ENCODE measurements at regions of chr12 and their contacts with region 1.

Region 1: GRCh38 chr12:69070319-69071090 is 137.5 kb upstream of the CPM start:
- DNase-seq: no peak
- ATAC-seq: peak; percentile 75 to 79
- H3K4me3 ChIP-seq: no peak overlapping the region
- H3K27ac ChIP-seq: no peak overlapping the region
- H3K4me1 ChIP-seq: peaks cover 9% of the 10 kb centered on the region
- H3K27me3 ChIP-seq: no peaks in the 10 kb centered on the region
- CTCF ChIP-seq: peak; percentile 88

Region 2: GRCh38 chr12:68866950-68867349 is 203.6 kb before region 1 on chr12:
- intact Hi-C with region 1: loop called (anchors 10 kb)
- DNase-seq: no peak
- ATAC-seq: no peak
- H3K4me3 ChIP-seq: no peak overlapping the region
- H3K27ac ChIP-seq: no peak overlapping the region
- H3K4me1 ChIP-seq: peaks cover 8% of the 10 kb centered on the region
- H3K27me3 ChIP-seq: no peaks in the 10 kb centered on the region
- CTCF ChIP-seq: no peak

Region 3: DNA sequence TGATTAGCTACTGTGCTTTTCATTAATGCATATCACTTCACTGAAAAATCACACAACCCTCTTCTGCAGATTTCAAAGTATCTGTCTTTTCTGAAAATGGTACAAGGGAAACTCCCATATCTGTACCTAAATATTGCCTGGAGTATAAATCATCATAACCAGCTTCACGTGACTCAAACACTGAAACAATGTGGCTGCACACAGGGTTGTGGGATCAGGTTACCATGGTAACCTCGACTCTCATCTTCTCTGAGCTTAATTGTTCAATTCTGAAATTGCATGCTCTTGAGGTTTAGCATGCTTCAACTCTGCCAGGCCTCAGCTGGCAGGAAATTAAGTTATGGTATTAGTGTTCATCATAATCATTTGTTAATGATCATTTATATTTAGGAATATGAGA is 91.3 kb after region 1 on chr12:
- intact Hi-C with region 1: no loop called
- DNase-seq: no peak
- ATAC-seq: no peak
- H3K4me3 ChIP-seq: no peak overlapping the region
- H3K27ac ChIP-seq: no peak overlapping the region
- H3K4me1 ChIP-seq: peaks cover 6% of the 10 kb centered on the region
- H3K27me3 ChIP-seq: no peaks in the 10 kb centered on the region
- CTCF ChIP-seq: no peak

Region 4: DNA sequence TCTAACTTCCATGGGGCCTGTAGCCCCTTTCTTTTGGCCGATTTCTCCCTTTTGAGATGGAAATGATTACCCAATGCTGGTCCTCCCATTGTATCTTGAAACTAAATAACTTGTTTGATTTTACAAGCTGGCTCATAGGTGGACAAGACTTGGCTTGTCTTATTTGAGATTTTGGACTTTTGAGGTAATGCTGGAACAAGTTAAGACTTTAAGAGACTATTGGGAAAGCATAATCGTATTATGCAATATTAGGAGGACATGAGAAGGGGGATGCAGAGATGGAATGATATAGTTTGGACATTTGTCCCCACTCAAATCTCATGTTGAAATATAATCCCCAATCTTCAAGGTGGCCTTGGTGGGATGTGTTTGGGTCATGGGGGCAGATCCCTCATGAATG is 228.4 kb after region 1 on chr12:
- intact Hi-C with region 1: no loop called
- DNase-seq: no peak
- ATAC-seq: no peak
- H3K4me3 ChIP-seq: no peak overlapping the region
- H3K27ac ChIP-seq: no peak overlapping the region
- H3K4me1 ChIP-seq: no peaks in the 10 kb centered on the region
- H3K27me3 ChIP-seq: no peaks in the 10 kb centered on the region
- CTCF ChIP-seq: no peak

Measured in lower lobe of right lung (tissue), 2 donors.